CD8-positive, alpha-beta memory T cell (primary cell): ENCODE measurements at regions of chr6 and their contacts with region 1.

Region 1: GRCh38 chr6:6614096-6614982 is 25.8 kb downstream of the LY86 start:
- DNase-seq: peak in 4 of 5 donors; percentile 18 to 78 (median 72)
- H3K4me3 ChIP-seq: peak overlapping the region; percentile 64
- H3K4me3 Mint-ChIP-seq: peak overlapping the region; percentile 61 to 88 (median 83)
- H3K27ac ChIP-seq: peak overlapping the region; percentile 29
- H3K27ac Mint-ChIP-seq: peak overlapping the region; percentile 80 to 97 (median 93)
- H3K4me1 ChIP-seq: peaks cover 74% of the 10 kb centered on the region
- H3K4me1 Mint-ChIP-seq: peaks cover 59 to 74% (median 66%) of the 10 kb centered on the region in 3 donors
- H3K27me3 ChIP-seq: no peaks in the 10 kb centered on the region
- H3K27me3 Mint-ChIP-seq: peaks cover 0 to 6% of the 10 kb centered on the region in 2 donors

Region 2: GRCh38 chr6:6659600-6660327 is 45.4 kb after region 1 on chr6:
- CTCF ChIA-PET with region 1: interaction called, 3 read pairs
- POLR2A ChIA-PET with region 1: interaction called, 12 read pairs
- DNase-seq: peak in 1 of 5 donors; percentile 19
- H3K4me3 ChIP-seq: no peak overlapping the region
- H3K4me3 Mint-ChIP-seq: peak overlapping the region in 2 of 7 donors; percentile 9 to 63
- H3K27ac ChIP-seq: no peak overlapping the region
- H3K27ac Mint-ChIP-seq: peak overlapping the region in 5 of 8 donors; percentile 88 to 97 (median 94)
- H3K4me1 ChIP-seq: peaks cover 46% of the 10 kb centered on the region
- H3K4me1 Mint-ChIP-seq: peaks cover 26 to 75% (median 46%) of the 10 kb centered on the region in 3 donors
- H3K27me3 ChIP-seq: no peaks in the 10 kb centered on the region
- H3K27me3 Mint-ChIP-seq: peaks cover 0 to 2% of the 10 kb centered on the region in 2 donors